ENCODE measurements at regions of chr6 and their contacts with region 1.

Region 1: GRCh38 chr6:158220786-158221442 is 52.8 kb downstream of the GTF2H5 start:
- DNase-seq: peak; percentile 93

Region 2: GRCh38 chr6:158122048-158122447 is 98.9 kb before region 1 on chr6:
- intact Hi-C with region 1: no loop called
- DNase-seq: no peak

Region 3: GRCh38 chr6:158338311-158339112 is 117.6 kb after region 1 on chr6:
- intact Hi-C with region 1: no loop called
- DNase-seq: no peak

Region 4: GRCh38 chr6:158518191-158519127 is 297.5 kb after region 1 on chr6:
- intact Hi-C with region 1: loop called (anchors 2 kb)
- DNase-seq: no peak

Region 5: DNA sequence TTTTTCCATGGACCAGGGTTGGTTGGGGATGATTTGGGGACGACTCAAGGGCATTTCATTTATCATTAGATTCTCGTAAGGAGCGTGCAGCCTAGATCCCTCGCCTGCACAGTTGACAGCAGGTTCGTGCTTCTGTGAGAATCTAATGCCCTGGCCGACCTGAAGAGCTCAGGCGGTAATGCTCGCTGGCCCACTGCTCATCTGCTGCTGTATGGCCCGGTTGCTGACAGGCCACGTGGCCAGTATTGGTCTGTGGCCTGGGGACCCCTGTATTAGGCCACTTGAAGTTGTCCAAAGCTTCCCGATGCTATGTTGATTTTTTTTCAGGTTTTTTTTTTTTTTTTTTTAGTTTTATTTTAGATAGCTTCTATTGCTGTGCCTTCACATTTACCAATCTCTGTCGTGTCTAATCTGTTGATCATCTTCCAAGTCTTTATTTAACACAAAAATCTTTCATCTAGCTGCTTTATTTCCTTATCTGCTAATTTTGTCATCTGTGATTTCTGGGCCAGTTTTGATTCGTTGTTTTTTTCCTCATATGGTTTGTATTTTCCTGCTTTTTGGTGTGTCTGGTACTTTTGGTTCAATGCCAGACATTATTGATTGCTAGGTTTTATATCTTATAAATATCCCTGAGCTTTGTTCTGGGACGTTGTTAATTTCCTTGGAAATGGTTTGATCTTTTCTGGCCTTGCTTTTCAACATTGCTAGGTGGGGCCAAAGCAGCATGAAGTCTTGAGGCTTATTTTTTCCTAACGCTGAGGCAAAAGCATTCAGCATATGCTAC is 382.5 kb after region 1 on chr6:
- intact Hi-C with region 1: loop called (anchors 2 kb)
- DNase-seq: no peak

Measured in cardiac septum (tissue), 1 donor.